ENCODE measurements at regions of chr7 and their contacts with region 1.

Region 1: DNA sequence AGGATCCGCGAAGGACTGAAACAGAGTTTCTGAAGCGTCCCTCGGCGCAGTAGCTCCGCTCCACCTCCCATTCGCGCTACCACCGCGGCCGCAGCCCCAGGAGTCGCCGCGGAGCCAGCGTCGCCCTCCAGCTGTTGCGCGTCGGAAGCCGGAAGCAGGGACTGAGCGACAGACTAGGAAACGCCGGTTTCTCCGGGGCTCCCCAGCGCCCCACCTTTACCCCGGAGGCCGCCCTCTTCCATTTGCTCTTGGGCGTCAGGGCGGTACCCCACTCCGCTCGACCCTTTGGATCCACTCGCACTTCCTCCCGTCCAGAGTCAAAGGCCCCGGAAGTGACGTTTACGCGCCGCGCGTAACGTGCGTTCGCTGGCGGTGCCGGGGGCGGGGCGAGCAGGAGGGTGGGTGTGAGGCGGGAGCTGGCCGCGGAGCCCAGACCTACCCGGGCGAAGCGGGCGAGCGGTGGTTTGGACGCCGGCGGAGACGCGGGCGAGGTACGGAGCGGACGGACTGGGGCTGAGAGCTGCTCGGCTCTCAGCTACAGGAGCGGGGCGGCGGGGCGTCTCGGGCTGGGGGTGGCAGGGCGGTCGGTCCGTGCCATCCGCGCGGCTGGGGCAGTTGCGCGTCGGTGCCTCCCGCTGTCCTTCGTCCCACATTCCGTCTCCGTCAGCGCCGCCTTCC is at the start of gene RABGEF1:
- DNase-seq: peak; percentile 91 to 99 (median 96)
- ATAC-seq: peak; percentile 91
- H3K4me3 ChIP-seq: peak within 1 kb of the TSS; percentile 90
- H3K4me3 Mint-ChIP-seq: peak within 1 kb of the TSS; percentile 98
- H3K27ac ChIP-seq: peak within 1 kb of the TSS; percentile 71 to 97
- H3K27ac Mint-ChIP-seq: peak within 1 kb of the TSS; percentile 98
- H3K4me1 ChIP-seq: peaks cover 36% of the 10 kb centered on the region
- H3K4me1 Mint-ChIP-seq: peaks cover 42% of the 10 kb centered on the region
- H3K27me3 ChIP-seq: no peaks in the 10 kb centered on the region
- H3K27me3 Mint-ChIP-seq: no peaks in the 10 kb centered on the region
- CTCF ChIP-seq: no peak
- total RNA-seq, gene RABGEF1: 18.9 to 20.1 TPM

Region 2: GRCh38 chr7:65037740-65038678 is 1702.4 kb before region 1 on chr7:
- CTCF ChIA-PET with region 1: no interaction called
- POLR2A ChIA-PET with region 1: no interaction called
- intact Hi-C with region 1: loop called in 1 of 2 experiments (anchors 5 kb)
- DNase-seq: peak; percentile 88 to 98 (median 93)
- ATAC-seq: peak; percentile 87
- H3K4me3 ChIP-seq: peak overlapping the region; percentile 63
- H3K4me3 Mint-ChIP-seq: peak overlapping the region; percentile 86
- H3K27ac ChIP-seq: peak overlapping the region in 1 of 2 donors; percentile 56
- H3K27ac Mint-ChIP-seq: peak overlapping the region; percentile 57
- H3K4me1 ChIP-seq: peaks cover 5% of the 10 kb centered on the region
- H3K4me1 Mint-ChIP-seq: peaks cover 17% of the 10 kb centered on the region
- H3K27me3 ChIP-seq: no peaks in the 10 kb centered on the region
- H3K27me3 Mint-ChIP-seq: no peaks in the 10 kb centered on the region
- CTCF ChIP-seq: no peak

Region 3: DNA sequence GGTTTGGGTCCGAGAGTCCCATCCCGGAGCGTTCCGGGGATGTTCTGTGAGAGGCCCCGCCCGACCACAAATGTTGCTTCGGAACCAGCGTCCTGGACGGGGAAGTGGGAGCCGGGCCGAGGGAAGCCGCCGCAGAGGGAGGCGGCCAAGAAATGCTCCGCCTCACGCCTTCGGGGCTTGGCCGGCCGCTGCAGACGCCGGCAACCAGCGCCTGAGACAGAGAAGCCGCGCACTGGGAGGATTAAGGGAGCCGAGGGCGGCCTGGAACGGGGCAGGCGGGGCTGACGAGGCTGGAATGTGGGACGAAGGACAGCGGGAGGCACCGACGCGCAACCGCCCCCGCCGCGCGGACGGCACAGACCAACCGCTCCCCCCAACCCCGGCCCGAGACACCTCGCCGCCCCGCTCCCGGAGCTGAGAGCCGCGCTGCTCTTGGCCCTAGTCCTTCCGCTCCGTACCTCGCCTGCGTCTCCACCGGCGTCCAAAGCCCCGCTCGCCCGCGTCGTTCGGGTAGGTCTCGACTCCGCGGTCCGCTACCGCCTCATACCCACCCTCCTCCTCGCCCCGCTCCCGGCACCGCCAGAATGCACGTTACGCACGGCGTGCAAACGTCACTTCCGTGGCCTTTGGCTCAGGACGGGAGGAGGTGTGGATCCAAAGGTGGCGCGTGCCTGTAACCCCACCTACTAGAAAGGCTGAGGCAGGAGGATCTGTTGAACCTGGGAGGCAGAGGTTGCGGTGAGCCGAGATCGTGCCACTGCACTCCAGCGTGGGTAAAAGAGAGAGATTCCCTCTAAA is 148.4 kb before region 1 on chr7:
- CTCF ChIA-PET with region 1: interaction called, 3 read pairs
- POLR2A ChIA-PET with region 1: interaction called, 3 read pairs
- intact Hi-C with region 1: loop called in 1 of 2 experiments (anchors 5 kb)
- DNase-seq: peak; percentile 76 to 96 (median 88)
- ATAC-seq: peak; percentile 98
- H3K4me3 ChIP-seq: peak overlapping the region; percentile 97
- H3K4me3 Mint-ChIP-seq: peak overlapping the region; percentile 99
- H3K27ac ChIP-seq: peak overlapping the region; percentile 60 to 80
- H3K27ac Mint-ChIP-seq: peak overlapping the region; percentile 99
- H3K4me1 ChIP-seq: peaks cover 43% of the 10 kb centered on the region
- H3K4me1 Mint-ChIP-seq: peaks cover 47% of the 10 kb centered on the region
- H3K27me3 ChIP-seq: no peaks in the 10 kb centered on the region
- H3K27me3 Mint-ChIP-seq: no peaks in the 10 kb centered on the region
- CTCF ChIP-seq: no peak

Region 4: GRCh38 chr7:66681491-66682349 is 58.7 kb before region 1 on chr7:
- CTCF ChIA-PET with region 1: no interaction called
- POLR2A ChIA-PET with region 1: interaction called, 8 read pairs
- intact Hi-C with region 1: loop called (anchors 1 kb)
- DNase-seq: peak; percentile 87 to 98 (median 95)
- ATAC-seq: peak; percentile 95
- H3K4me3 ChIP-seq: peak overlapping the region; percentile 95
- H3K4me3 Mint-ChIP-seq: peak overlapping the region; percentile 99
- H3K27ac ChIP-seq: peak overlapping the region; percentile 96 to 99
- H3K27ac Mint-ChIP-seq: peak overlapping the region; percentile 98
- H3K4me1 ChIP-seq: peaks cover 29% of the 10 kb centered on the region
- H3K4me1 Mint-ChIP-seq: peaks cover 40% of the 10 kb centered on the region
- H3K27me3 ChIP-seq: no peaks in the 10 kb centered on the region
- H3K27me3 Mint-ChIP-seq: no peaks in the 10 kb centered on the region
- CTCF ChIP-seq: no peak

Region 5: GRCh38 chr7:66886152-66886551 is 145.7 kb after region 1 on chr7:
- CTCF ChIA-PET with region 1: no interaction called
- POLR2A ChIA-PET with region 1: no interaction called
- intact Hi-C with region 1: no loop called
- DNase-seq: no peak
- ATAC-seq: no peak
- H3K4me3 ChIP-seq: no peak overlapping the region
- H3K4me3 Mint-ChIP-seq: no peak overlapping the region
- H3K27ac ChIP-seq: no peak overlapping the region
- H3K27ac Mint-ChIP-seq: no peak overlapping the region
- H3K4me1 ChIP-seq: no peaks in the 10 kb centered on the region
- H3K4me1 Mint-ChIP-seq: no peaks in the 10 kb centered on the region
- H3K27me3 ChIP-seq: no peaks in the 10 kb centered on the region
- H3K27me3 Mint-ChIP-seq: no peaks in the 10 kb centered on the region
- CTCF ChIP-seq: no peak

Region 6: DNA sequence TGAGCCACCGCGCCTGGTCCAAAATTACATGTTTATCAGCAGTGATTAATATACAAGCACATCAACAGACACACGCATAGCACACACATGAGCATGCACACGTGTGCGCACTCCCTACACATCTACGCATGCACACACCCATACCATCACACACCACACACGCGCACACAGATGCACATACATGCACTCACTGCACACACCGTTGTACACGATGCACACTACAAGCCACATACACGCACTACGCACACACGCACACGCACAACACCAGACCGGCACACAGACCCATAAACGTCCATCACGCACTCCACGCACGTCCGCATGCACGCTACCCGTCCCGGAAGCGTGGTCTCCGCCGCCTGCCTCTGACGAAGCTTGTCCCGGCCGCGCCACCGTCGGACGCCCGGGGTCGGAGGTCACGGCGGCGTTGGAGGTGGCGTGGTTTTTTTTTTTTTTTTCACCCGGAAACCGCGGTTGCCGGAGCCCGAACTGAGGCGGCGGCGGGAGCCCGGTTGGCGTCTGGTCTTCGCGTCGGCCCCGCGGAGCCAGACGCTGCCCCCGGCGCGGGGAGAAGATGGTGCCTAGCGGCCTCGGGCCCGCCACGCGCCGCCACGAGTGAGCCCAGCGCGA is 180.4 kb after region 1 on chr7 and contains the start of gene TMEM248:
- CTCF ChIA-PET with region 1: no interaction called
- POLR2A ChIA-PET with region 1: interaction called, 8 read pairs
- intact Hi-C with region 1: loop called (anchors 5 kb)
- DNase-seq: peak; percentile 85 to 96 (median 91)
- ATAC-seq: peak; percentile 86
- H3K4me3 ChIP-seq: peak within 1 kb of the TSS; percentile 95
- H3K4me3 Mint-ChIP-seq: peak within 1 kb of the TSS; percentile 100
- H3K27ac ChIP-seq: peak within 1 kb of the TSS; percentile 76 to 90
- H3K27ac Mint-ChIP-seq: peak within 1 kb of the TSS; percentile 99
- H3K4me1 ChIP-seq: peaks cover 42% of the 10 kb centered on the region
- H3K4me1 Mint-ChIP-seq: peaks cover 43% of the 10 kb centered on the region
- H3K27me3 ChIP-seq: no peaks in the 10 kb centered on the region
- H3K27me3 Mint-ChIP-seq: no peaks in the 10 kb centered on the region
- CTCF ChIP-seq: no peak
- total RNA-seq, gene TMEM248: 64.7 to 67.4 TPM